Activated T-helper 2 cell treated with anti-CD3 and anti-CD28 coated beads, Interferon-gamma antibody, Interleukin-2, Interleukin-4, amounts not matched to agents 10 μg/mL and 5 μg/mL and 100 μg/mL, durations not matched to agents 14 hours and 24 hours and 36 hours (primary cell): ENCODE measurements at regions of chr9 and their contacts with region 1.

Region 1: GRCh38 chr9:20884985-20885593 is 146.4 kb downstream of the HACD4 start:
- DNase-seq: peak; percentile 28
- H3K4me3 Mint-ChIP-seq: no peak overlapping the region
- H3K27ac Mint-ChIP-seq: no peak overlapping the region
- H3K4me1 Mint-ChIP-seq: peaks cover 3% of the 10 kb centered on the region
- H3K27me3 Mint-ChIP-seq: no peaks in the 10 kb centered on the region

Region 2: DNA sequence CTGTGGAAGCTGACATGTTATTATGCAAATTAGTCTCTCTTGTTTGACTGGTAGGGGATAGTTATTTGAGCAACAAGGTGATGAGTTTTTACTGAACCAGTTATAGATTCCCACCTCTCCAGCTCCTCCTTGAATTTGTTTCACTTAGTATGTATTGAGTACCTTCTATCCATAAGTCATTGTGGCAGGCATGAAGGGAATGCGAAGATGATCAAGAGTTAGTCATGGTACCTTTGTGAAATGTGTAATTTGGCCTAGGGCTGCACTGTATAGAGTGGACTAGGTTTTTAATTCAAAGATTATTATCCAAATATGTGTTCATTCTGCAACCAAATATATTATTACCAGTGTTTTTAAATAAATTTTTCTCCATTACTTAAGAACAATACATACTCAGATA is 36.3 kb after region 1 on chr9:
- intact Hi-C with region 1: no loop called
- DNase-seq: no peak
- H3K4me3 Mint-ChIP-seq: no peak overlapping the region
- H3K27ac Mint-ChIP-seq: no peak overlapping the region
- H3K4me1 Mint-ChIP-seq: peaks cover 17% of the 10 kb centered on the region
- H3K27me3 Mint-ChIP-seq: no peaks in the 10 kb centered on the region

Region 3: GRCh38 chr9:20941174-20941690 is 56.1 kb after region 1 on chr9:
- intact Hi-C with region 1: loop called (anchors 2 kb)
- DNase-seq: peak; percentile 40
- H3K4me3 Mint-ChIP-seq: no peak overlapping the region
- H3K27ac Mint-ChIP-seq: no peak overlapping the region
- H3K4me1 Mint-ChIP-seq: peaks cover 3% of the 10 kb centered on the region
- H3K27me3 Mint-ChIP-seq: no peaks in the 10 kb centered on the region

Region 4: DNA sequence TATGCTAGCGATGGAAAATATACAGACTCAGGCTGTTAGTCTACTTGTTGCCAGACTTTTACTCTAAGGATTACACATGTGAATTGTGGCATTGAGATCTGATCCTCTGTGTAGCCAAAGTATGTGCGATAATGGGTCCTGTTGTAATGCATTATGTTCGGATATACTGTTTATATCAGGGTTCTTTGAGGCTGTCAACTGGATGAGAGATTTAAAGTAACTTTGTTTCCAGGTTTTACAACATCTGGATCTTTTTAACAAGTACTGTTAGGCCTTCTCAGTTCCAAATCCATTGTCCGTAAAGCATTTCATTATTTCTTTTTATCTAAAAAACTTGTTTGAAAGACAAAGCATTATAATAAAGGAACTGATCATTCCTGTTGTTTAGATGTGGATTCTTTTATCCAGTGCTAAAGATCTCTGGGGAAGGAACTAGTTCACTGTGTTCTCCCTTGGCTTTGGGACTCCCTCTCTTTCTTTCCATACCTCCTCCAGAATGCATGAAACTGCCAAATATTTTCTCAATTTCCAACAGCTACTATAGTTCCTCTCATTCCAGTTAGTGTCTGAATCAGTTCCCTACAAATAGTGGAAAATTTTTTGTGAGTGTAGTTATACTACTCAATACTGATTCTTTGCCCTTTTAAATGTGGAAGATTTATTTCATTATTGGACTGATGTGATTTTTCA is 77.6 kb after region 1 on chr9:
- intact Hi-C with region 1: no loop called
- DNase-seq: no peak
- H3K4me3 Mint-ChIP-seq: no peak overlapping the region
- H3K27ac Mint-ChIP-seq: no peak overlapping the region
- H3K4me1 Mint-ChIP-seq: peaks cover 5% of the 10 kb centered on the region
- H3K27me3 Mint-ChIP-seq: no peaks in the 10 kb centered on the region